ENCODE measurements at regions of chr12 and their contacts with region 1.

Region 1: DNA sequence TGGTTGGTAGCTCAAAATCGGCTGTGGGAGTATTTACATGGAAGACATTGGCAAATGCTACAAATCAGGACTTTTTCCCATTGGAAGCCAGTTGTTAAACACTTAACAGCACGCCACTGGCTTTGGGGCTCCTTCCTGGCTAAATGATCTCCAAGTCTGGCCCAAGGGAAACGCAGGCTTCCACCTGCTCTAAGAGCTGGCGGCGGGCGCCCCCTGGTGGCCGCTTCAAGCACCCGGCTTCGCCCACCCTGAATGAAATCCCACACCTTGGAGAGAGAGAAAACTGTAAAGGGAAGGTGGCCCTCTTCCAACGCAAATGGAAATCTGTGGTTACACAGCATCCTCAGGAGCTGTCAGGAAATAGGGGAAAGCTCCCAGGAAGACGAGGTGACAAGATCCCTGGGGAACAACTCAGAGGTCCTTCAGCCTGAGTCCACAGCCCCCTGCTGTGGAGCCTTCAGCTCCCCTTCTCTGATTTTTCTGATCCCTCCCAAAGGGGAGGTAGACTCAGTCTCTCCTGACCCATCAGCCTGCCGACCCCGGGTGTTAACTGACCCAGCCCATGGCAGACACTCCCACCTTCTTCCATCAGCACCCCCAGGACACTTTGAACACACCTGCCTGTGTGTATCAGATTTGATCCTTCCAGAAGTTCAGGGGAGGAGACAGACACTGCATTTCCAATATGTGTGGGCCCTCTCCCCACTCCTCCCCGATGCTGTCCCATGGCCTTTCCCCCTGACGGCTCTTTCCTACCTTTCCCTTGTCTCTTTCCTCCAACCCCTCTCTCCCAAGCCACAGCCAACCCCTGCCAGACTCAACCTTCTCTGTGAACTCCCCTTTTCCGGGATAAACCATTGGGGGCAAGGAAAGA is 15.4 kb downstream of the SELPLG start:
- DNase-seq: peak; percentile 71 to 86
- H3K4me3 ChIP-seq: no peak overlapping the region
- H3K4me3 Mint-ChIP-seq: no peak overlapping the region
- H3K27ac Mint-ChIP-seq: no peak overlapping the region
- H3K4me1 ChIP-seq: no peaks in the 10 kb centered on the region; the same call in 1 of the 2 replicates
- H3K4me1 Mint-ChIP-seq: peaks cover 9% of the 10 kb centered on the region
- H3K27me3 ChIP-seq: no peaks in the 10 kb centered on the region
- H3K27me3 Mint-ChIP-seq: peaks cover 7% of the 10 kb centered on the region
- CTCF ChIP-seq: peak; percentile 89 to 94

Region 2: GRCh38 chr12:108562348-108563135 is 55.8 kb before region 1 on chr12 and contains the start of gene ISCU:
- CTCF ChIA-PET with region 1: interaction called, 8 read pairs
- POLR2A ChIA-PET with region 1: interaction called, 18 read pairs
- intact Hi-C with region 1: loop called (anchors 1 kb)
- DNase-seq: peak; percentile 96 to 99
- H3K4me3 ChIP-seq: peak within 1 kb of the TSS; percentile 96
- H3K4me3 Mint-ChIP-seq: peak within 1 kb of the TSS; percentile 96
- H3K27ac Mint-ChIP-seq: peak within 1 kb of the TSS; percentile 99
- H3K4me1 ChIP-seq: 0 out of 2 replicates have a peak, but pooled peaks cover 3% of the 10 kb centered on the region
- H3K4me1 Mint-ChIP-seq: no peaks in the 10 kb centered on the region
- H3K27me3 ChIP-seq: no peaks in the 10 kb centered on the region
- H3K27me3 Mint-ChIP-seq: no peaks in the 10 kb centered on the region
- CTCF ChIP-seq: no peak
- total RNA-seq, gene ISCU: 70.1 and 86.9 TPM in 2 replicates

Region 3: DNA sequence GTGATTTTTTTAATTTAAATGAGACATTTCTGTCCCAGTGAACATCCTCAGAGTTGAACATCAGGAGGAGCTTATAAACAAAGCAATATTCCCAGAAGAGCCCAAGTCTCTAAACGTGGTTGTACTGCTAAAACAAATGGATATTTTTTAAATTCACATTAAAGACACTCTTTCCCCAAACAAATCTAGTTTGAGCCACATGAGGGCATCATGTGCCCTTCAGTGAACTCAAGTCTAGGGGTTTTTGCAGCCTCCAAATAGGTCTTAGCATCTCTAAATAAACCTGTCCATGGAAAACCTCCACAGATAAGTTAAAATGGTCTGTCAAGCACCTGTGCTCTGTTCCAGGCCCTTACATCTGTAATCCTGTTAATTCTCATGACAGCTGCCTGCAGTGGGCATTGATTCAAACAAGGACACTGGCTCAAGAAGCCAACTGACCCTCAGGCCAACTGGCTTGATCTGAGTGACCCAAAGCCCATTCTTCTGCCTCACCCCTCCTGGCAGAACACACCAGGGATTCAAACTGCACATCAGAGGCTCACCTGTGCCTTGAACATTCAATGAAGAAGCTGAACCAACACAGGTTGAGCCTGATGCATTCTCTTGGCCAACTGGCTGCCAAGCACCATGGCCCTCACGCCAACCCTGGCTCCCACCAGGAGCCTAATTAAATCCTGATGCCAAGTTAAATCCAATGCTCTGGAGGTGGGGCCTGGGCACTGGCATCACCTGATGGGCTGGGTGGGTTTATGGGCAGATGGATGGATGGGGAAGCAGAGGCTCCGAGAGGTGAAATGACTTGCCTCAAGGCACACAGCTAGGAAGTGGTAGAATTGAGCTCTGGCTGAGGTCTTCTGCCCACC is 47.3 kb before region 1 on chr12:
- CTCF ChIA-PET with region 1: interaction called, 3 read pairs
- POLR2A ChIA-PET with region 1: no interaction called
- intact Hi-C with region 1: loop called (anchors 1 kb)
- DNase-seq: no peak
- H3K4me3 ChIP-seq: no peak overlapping the region
- H3K4me3 Mint-ChIP-seq: no peak overlapping the region
- H3K27ac Mint-ChIP-seq: no peak overlapping the region
- H3K4me1 ChIP-seq: no peaks in the 10 kb centered on the region
- H3K4me1 Mint-ChIP-seq: no peaks in the 10 kb centered on the region
- H3K27me3 ChIP-seq: no peaks in the 10 kb centered on the region
- H3K27me3 Mint-ChIP-seq: peaks cover 4% of the 10 kb centered on the region
- CTCF ChIP-seq: no peak

Measured in Caco-2 (cell line).